Naive thymus-derived CD4-positive, alpha-beta T cell (primary cell): ENCODE measurements at regions of chr13 and their contacts with region 1.

Region 1: DNA sequence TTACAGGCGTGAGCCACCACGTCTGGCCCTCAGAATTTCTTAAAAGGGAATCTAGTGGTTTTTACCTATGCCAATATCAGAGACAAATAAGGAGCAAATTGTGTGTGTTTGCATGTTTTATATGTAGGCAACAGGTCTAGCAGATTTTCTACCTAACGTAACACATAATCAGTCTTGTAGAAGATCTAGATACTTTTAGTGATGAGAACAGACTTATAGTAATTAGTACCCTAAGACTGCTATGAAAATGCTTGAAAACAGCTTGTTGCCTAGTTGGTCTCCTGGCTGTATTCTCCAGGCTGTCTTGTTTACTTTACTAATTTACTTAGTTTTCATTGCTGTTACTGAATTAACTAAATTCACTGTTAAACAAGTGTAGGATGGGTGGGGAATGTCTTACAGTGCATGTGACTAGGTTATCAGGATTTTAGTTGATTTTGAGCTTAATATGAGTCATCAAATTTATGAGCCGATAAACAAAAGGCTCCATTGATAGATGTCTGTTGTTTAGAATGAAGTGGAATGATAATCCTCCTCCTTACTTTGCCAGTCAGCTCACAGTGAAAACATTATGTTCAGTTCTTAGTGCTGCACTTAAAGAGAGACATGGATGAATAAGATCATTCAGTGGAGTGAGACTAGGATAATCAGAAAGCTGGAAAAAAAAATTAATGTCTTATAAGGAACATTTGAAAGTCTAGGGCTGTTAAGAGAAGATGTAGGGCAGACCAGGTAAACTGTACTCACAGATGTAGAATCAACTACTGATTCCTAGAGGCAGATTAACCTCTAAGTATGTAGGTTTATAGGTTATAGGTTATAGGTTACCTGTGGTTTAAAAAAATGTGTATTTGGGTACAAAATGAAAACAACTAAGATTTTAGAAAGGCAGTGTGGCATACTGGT is 22.4 kb downstream of the GTF2F2 start:
- DNase-seq: no peak
- ATAC-seq: no peak
- H3K4me3 ChIP-seq: no peak overlapping the region
- H3K4me3 Mint-ChIP-seq: no peak overlapping the region
- H3K27ac ChIP-seq: no peak overlapping the region
- H3K27ac Mint-ChIP-seq: no peak overlapping the region
- H3K4me1 ChIP-seq: no peaks in the 10 kb centered on the region
- H3K4me1 Mint-ChIP-seq: peaks cover 11 to 52% (median 37%) of the 10 kb centered on the region in 7 donors
- H3K27me3 ChIP-seq: no peaks in the 10 kb centered on the region
- H3K27me3 Mint-ChIP-seq: no peaks in the 10 kb centered on the region

Region 2: DNA sequence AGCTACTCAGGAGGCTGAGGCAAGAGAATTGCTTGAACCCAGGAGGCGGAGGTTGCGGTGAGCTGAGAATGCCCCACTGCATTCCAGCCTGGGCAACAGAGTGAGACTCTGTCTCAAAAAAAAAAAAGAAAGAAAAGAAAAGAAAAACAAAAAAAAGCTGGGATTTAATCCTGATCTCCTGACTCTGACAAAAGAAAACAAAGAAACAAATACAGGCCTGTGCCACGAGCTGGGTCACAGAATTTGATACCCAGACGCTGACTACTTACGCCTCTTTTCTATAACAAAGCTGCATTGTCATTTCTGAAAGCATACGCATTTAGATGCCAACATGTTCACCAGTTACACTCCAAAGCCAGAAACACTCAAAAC is 40.6 kb before region 1 on chr13:
- CTCF ChIA-PET with region 1: no interaction called
- POLR2A ChIA-PET with region 1: no interaction called
- intact Hi-C with region 1: loop called in 1 of 2 experiments (anchors 5 kb)
- DNase-seq: no peak
- ATAC-seq: no peak
- H3K4me3 ChIP-seq: no peak overlapping the region
- H3K4me3 Mint-ChIP-seq: no peak overlapping the region
- H3K27ac ChIP-seq: no peak overlapping the region
- H3K27ac Mint-ChIP-seq: no peak overlapping the region
- H3K4me1 ChIP-seq: no peaks in the 10 kb centered on the region
- H3K4me1 Mint-ChIP-seq: no peaks in the 10 kb centered on the region
- H3K27me3 ChIP-seq: no peaks in the 10 kb centered on the region
- H3K27me3 Mint-ChIP-seq: peaks cover 0 to 11% (median 6%) of the 10 kb centered on the region in 5 donors

Region 3: GRCh38 chr13:45162821-45163220 is 20.1 kb after region 1 on chr13:
- CTCF ChIA-PET with region 1: no interaction called
- POLR2A ChIA-PET with region 1: no interaction called
- intact Hi-C with region 1: no loop called
- DNase-seq: no peak
- ATAC-seq: no peak
- H3K4me3 ChIP-seq: no peak overlapping the region
- H3K4me3 Mint-ChIP-seq: no peak overlapping the region
- H3K27ac ChIP-seq: no peak overlapping the region
- H3K27ac Mint-ChIP-seq: no peak overlapping the region
- H3K4me1 ChIP-seq: no peaks in the 10 kb centered on the region
- H3K4me1 Mint-ChIP-seq: peaks cover 0 to 5% (median 0%) of the 10 kb centered on the region in 7 donors
- H3K27me3 ChIP-seq: no peaks in the 10 kb centered on the region
- H3K27me3 Mint-ChIP-seq: no peaks in the 10 kb centered on the region

Region 4: GRCh38 chr13:45257638-45258338 is 115.1 kb after region 1 on chr13:
- CTCF ChIA-PET with region 1: no interaction called
- POLR2A ChIA-PET with region 1: no interaction called
- intact Hi-C with region 1: no loop called
- DNase-seq: no peak
- ATAC-seq: no peak
- H3K4me3 ChIP-seq: no peak overlapping the region
- H3K4me3 Mint-ChIP-seq: no peak overlapping the region
- H3K27ac ChIP-seq: no peak overlapping the region
- H3K27ac Mint-ChIP-seq: peak overlapping the region in 2 of 9 donors; percentile 54 to 62
- H3K4me1 ChIP-seq: no peaks in the 10 kb centered on the region
- H3K4me1 Mint-ChIP-seq: peaks cover 0 to 12% (median 0%) of the 10 kb centered on the region in 7 donors
- H3K27me3 ChIP-seq: no peaks in the 10 kb centered on the region
- H3K27me3 Mint-ChIP-seq: no peaks in the 10 kb centered on the region